ENCODE measurements at regions of chr17 and their contacts with region 1.

Region 1: DNA sequence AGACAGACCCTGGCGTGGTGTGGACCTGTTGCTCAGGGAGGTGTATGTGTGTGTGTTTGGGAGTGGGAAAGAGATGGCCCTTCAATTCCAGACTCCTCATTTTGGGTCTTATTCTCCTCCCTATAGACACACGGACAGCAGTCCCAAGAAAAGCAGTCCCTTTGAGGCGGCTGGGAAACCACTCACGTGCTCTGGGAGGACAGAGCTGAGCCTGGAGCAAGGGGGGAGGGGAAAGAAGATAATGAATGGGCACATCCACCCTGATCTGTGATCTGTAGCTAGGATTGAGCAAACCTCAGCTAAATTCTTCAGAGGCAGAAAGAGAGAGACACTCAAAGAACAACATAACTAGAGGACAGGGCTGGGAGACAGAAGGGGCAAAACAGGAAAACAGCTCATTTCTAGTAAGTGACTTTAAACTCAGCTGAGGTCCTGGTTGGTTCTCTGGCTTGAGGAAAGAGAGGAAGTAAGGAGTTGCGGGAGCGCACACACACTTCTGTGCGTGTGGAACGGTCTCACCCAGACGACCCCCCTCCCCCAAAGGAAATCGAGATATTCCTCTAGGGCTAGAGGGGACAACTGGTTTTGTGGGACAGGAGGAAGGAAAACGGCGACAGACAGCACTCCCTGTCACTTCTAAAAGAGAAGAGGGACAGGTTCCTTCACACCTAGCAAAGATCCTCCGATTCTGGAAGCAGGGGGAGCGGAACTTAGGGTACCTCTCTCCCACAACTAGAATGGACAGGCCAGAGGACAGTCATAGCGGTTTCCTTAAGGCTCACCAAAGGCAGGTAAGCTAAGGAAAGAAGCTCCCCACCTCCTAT is 658 bp downstream of the RAB5C start:
- DNase-seq: peak; percentile 69
- H3K4me3 Mint-ChIP-seq: peak overlapping the region; percentile 84
- H3K27ac Mint-ChIP-seq: peak overlapping the region; percentile 57
- H3K4me1 Mint-ChIP-seq: peaks cover 32% of the 10 kb centered on the region
- H3K27me3 Mint-ChIP-seq: no peaks in the 10 kb centered on the region

Region 2: GRCh38 chr17:41548844-41549595 is 605.1 kb before region 1 on chr17:
- intact Hi-C with region 1: no loop called
- DNase-seq: peak; percentile 95
- H3K4me3 Mint-ChIP-seq: peak overlapping the region; percentile 66
- H3K27ac Mint-ChIP-seq: peak overlapping the region; percentile 82
- H3K4me1 Mint-ChIP-seq: peaks cover 19% of the 10 kb centered on the region
- H3K27me3 Mint-ChIP-seq: peaks cover 13% of the 10 kb centered on the region

Region 3: GRCh38 chr17:41966463-41967140 is 187.5 kb before region 1 on chr17 and contains the start of gene CNP:
- intact Hi-C with region 1: loop called (anchors 1 kb)
- DNase-seq: peak; percentile 97
- H3K4me3 Mint-ChIP-seq: peak within 1 kb of the TSS; percentile 81
- H3K27ac Mint-ChIP-seq: peak within 1 kb of the TSS; percentile 84
- H3K4me1 Mint-ChIP-seq: peaks cover 32% of the 10 kb centered on the region
- H3K27me3 Mint-ChIP-seq: peaks cover 3% of the 10 kb centered on the region
- total RNA-seq, gene CNP: 81.6 and 84.1 TPM in 2 replicates

Region 4: GRCh38 chr17:42112552-42113176 is 41.5 kb before region 1 on chr17 and contains the start of gene DHX58:
- intact Hi-C with region 1: loop called (anchors 2 kb)
- DNase-seq: peak; percentile 96
- H3K4me3 Mint-ChIP-seq: peak within 1 kb of the TSS; percentile 94
- H3K27ac Mint-ChIP-seq: peak within 1 kb of the TSS; percentile 93
- H3K4me1 Mint-ChIP-seq: peaks cover 42% of the 10 kb centered on the region
- H3K27me3 Mint-ChIP-seq: no peaks in the 10 kb centered on the region
- total RNA-seq, gene DHX58: 22.9 and 25.8 TPM in 2 replicates

Region 5: DNA sequence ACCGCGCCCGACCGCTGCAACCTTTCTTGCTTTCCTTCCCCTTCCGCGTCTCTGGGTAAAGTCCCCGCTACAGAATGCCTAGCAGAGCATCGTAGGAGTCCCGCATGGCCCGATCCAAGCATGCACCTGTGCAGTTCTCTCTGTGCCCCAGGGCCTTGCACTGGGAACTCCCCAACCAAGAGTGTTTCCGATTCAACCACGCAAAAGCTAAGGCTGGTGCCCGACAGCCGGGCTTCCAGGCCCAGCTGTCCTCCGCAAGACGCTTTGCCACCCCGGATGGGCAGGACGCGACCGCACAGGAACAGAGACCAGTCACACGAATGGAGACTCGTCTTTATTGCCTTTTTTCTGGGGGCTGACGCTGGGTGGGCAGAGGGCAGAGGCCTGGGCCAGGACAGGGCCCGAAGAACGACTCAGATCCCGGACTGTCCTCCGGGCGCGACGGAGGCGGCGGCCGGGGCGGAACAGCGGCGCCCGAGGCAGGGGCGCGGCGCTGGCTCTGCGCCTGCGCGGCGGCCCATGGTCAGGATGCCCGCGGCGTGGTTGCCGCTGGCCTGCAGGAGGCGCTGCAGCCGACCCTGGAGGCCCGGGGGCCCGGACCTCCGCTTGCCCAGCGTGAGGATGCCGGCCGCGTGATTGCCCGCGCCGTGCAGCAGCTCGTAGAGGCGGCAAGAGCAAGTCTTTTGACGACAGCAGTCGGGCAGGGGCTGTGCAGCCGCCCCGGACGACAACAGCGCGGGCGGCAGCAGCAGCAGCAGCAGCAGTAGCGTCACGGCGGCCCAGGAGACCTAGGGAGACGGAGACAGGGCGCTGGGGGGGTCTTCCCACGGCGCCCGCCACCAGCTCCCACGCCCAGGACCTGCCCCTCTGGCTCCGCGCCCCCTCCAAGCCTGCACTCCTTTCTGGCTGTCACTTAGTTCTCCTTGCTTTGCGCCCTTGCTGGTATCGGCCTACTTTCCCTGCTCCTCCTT is 29.9 kb after region 1 on chr17:
- intact Hi-C with region 1: loop called (anchors 1 kb)
- DNase-seq: peak; percentile 96
- H3K4me3 Mint-ChIP-seq: peak overlapping the region; percentile 89
- H3K27ac Mint-ChIP-seq: peak overlapping the region; percentile 93
- H3K4me1 Mint-ChIP-seq: peaks cover 34% of the 10 kb centered on the region
- H3K27me3 Mint-ChIP-seq: peaks cover 17% of the 10 kb centered on the region

Measured in activated CD4-positive, alpha-beta T cell treated with anti-CD3 and anti-CD28 coated beads, Interleukin-2, amount 10 ng/mL, durations not matched to agents 24 days and 14 days (primary cell).